Lower lobe of right lung (tissue), 2 donors: ENCODE measurements at regions of chr1 and their contacts with region 1.

Region 1: DNA sequence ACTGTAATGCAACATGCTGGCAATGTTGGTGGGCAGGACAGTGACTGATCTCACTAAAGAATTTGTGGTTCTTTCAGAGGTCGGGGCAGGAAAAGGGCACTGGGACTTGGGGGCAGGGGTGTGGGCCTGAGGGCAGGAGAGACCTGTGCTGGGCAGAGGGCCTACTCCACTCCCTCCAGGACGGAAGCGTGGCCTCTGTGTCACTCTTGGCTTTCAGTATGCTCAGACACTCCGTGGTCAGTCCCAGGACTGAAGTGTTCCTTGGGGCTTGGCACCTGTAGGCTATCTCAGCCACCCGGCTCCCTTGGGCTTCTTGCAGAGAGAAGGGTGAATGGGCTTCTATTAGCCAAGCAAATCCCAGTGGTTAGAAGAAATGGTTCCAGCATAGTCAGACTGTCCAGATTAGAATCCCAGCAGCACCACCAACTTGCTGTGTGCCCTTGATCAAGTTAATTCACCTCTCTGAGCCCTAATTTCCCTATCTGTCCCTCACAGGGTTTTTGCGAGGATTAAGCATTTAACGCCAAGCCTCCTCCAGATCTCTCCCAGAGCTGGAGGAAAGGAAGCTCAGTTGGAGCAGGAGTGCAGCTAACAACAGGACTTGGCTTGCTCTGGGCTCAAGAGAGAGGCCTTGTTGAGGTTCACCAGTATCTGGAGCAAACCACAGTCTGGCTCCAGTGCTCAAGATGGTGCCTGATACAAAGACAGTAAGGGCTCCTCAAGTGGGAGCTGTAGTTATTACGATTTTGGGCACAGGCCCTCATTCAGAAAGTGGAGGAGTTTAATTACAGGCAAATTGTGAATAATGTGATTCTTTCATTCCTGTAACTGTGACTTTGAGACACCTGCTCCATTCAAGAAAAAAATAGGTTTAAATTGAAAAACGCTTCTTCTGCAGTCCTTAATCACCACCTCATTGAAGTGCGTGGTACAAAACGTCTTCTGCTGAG is 57.7 kb upstream of the LRP8 start:
- DNase-seq: peak; percentile 24
- ATAC-seq: no peak
- H3K4me3 ChIP-seq: no peak overlapping the region
- H3K27ac ChIP-seq: no peak overlapping the region
- H3K4me1 ChIP-seq: no peaks in the 10 kb centered on the region
- H3K27me3 ChIP-seq: no peaks in the 10 kb centered on the region
- CTCF ChIP-seq: no peak

Region 2: GRCh38 chr1:53249706-53250105 is 135.8 kb before region 1 on chr1:
- intact Hi-C with region 1: no loop called
- DNase-seq: no peak
- ATAC-seq: no peak
- H3K4me3 ChIP-seq: no peak overlapping the region
- H3K27ac ChIP-seq: no peak overlapping the region
- H3K4me1 ChIP-seq: no peaks in the 10 kb centered on the region
- H3K27me3 ChIP-seq: no peaks in the 10 kb centered on the region
- CTCF ChIP-seq: no peak

Region 3: DNA sequence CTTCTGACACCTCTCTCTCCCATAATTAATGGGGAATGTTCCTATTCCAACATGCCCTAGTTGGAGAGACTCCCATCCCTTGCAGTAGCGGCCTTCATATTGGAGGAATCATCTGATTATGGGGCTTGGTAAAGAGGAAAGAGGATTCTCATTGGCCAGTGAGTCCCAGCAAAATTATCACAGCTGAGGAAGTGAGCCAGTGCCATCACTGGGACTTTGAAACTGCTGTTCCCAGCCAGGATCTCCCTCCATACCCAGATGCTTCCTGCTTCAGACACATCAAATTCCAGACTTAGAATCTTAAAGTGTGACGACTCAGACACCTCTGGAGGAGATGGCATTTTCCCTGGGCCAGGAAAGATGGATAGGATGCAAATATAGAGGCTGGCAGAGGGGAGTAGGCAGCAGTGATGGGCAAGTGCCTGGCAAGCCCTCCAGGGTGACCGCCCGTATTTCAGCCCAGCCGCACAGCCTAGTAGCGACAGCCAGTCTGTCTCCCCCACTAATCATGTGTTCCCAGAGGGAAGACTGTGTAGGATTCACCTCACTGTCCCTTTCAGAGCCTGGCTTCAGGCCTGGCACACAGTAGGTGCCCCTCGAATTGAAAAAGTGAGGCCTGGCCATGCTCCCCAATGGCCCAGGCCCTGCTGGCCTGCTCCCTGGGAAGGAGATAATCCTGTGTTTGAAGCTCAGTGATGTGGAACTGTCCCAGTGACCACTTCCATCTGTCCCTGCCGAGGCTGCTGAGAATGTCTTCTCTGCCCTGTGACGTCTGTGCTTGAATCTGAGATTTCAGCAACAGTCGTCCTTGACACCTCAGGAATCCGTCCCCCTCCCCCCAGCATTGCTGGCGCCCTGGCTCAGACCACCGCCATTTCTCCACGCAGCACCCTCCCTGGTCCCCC is 106.0 kb before region 1 on chr1:
- intact Hi-C with region 1: loop called (anchors 5 kb)
- DNase-seq: no peak
- ATAC-seq: no peak
- H3K4me3 ChIP-seq: no peak overlapping the region
- H3K27ac ChIP-seq: no peak overlapping the region
- H3K4me1 ChIP-seq: no peaks in the 10 kb centered on the region
- H3K27me3 ChIP-seq: no peaks in the 10 kb centered on the region
- CTCF ChIP-seq: no peak